Calu3 (cell line): ENCODE measurements at regions of chr16 and their contacts with region 1.

Region 1: DNA sequence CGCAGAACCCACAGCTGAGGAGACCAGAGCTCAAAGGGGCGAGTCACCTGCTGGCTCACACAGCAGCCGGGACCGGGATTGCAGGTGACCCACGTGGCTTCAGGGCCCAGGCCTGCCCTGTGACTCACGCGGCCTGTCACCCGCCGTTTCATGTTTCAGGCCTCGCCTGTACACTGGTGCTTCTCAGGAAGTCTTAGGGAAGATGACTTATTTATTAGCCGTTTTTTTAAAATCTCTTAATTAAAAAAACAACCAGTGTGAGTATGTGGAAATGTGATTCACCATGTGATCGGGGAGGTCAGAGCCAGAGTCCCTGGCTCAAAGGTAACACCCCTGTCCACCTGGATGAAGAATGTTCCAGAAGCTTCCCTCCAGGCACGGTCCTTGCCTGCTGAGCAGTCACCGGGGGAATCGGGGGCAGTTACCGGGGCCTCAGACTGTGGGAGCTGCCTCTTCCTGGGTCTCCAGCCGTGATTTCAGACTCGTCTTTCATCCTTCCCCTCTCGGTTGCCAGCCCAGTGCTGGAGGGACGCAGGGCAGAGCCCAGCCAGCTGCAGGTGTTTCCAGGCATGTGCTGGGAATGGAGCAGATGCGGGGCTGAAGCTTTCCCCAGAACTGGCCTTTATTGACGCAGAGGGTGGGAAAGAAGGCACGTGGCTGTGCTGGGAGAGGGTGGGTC is 49.3 kb downstream of the CMIP start:
- DNase-seq: peak; percentile 93
- H3K4me3 Mint-ChIP-seq: peak overlapping the region; percentile 22
- H3K27ac Mint-ChIP-seq: peak overlapping the region; percentile 74
- H3K4me1 Mint-ChIP-seq: peaks cover 43% of the 10 kb centered on the region
- H3K27me3 Mint-ChIP-seq: no peaks in the 10 kb centered on the region
- CTCF ChIP-seq: no peak

Region 2: GRCh38 chr16:81204798-81205680 is 288.9 kb before region 1 on chr16:
- CTCF ChIA-PET with region 1: no interaction called
- intact Hi-C with region 1: no loop called
- DNase-seq: peak; percentile 37
- H3K4me3 Mint-ChIP-seq: no peak overlapping the region
- H3K27ac Mint-ChIP-seq: no peak overlapping the region
- H3K4me1 Mint-ChIP-seq: peaks cover 8% of the 10 kb centered on the region
- H3K27me3 Mint-ChIP-seq: peaks cover 12% of the 10 kb centered on the region
- CTCF ChIP-seq: peak; percentile 66

Region 3: DNA sequence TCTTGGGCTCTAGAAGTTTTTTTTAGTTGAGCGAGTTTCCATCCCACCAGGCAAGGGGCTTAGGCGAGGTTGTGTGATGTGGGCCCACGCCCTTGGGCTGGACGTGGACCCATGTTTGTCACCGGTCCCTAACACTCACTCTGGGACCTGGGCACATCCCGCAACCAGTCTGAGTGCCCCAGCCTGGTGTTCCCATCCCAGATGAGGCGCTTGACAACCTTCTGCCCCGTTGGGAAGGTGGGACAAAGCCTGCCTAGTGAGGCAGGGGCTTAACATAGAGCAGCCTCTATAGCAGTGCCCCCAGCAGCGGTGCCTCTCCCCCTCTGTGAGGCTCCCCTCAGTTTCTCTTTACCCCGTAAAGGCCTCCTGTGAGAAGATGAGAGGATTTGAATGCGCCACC is 26.8 kb before region 1 on chr16:
- CTCF ChIA-PET with region 1: interaction called, 10 read pairs
- intact Hi-C with region 1: no loop called
- DNase-seq: no peak
- H3K4me3 Mint-ChIP-seq: no peak overlapping the region
- H3K27ac Mint-ChIP-seq: no peak overlapping the region
- H3K4me1 Mint-ChIP-seq: peaks cover 20% of the 10 kb centered on the region
- H3K27me3 Mint-ChIP-seq: no peaks in the 10 kb centered on the region
- CTCF ChIP-seq: no peak

Region 4: DNA sequence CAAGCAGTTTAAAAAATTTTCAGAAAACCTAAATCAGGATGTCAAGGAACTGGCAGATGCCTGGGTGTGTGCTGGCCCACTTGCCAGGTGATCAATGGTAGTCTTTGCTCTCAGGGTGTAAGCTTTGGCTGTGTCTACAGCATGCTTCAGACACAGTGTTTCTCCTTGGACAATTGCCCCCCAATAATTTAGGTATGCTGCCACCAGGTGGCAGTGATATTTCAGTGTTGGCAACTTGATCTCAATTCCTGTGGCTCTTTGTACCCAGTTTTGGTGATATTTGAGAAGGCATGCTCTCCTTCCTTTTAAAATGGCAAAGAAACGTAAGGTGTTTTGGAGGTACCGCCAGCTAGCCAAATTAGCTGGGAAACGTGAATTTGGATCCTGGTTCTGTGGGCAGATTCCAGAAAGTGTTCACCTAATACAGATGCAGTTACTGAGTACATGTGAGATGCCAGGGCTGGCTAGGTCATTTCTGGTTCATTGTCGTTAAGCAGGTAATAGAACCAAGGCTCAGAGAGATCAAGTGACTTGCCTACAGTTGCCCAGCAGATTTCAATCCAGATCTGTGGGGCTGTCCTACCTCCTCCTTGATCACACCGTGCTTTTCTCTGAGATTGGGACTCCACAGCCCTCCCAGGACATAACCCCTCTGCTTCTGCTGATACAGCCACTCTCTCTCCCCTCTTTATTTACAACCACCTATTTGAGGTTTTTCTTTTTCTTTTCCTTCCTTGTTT is 129.6 kb after region 1 on chr16:
- CTCF ChIA-PET with region 1: no interaction called
- intact Hi-C with region 1: no loop called
- DNase-seq: peak; percentile 66
- H3K4me3 Mint-ChIP-seq: no peak overlapping the region
- H3K27ac Mint-ChIP-seq: no peak overlapping the region
- H3K4me1 Mint-ChIP-seq: no peaks in the 10 kb centered on the region
- H3K27me3 Mint-ChIP-seq: no peaks in the 10 kb centered on the region
- CTCF ChIP-seq: peak; percentile 75